ENCODE measurements at regions of chr19 and their contacts with region 1.

Region 1: GRCh38 chr19:42140125-42140754 is 8.0 kb upstream of the POU2F2 start:
- DNase-seq: peak in 6 of 35 experiments; percentile 10 to 39 (median 30)
- ATAC-seq: peak in 2 of 4 experiments; percentile 35 to 54
- H3K4me3 ChIP-seq: no peak overlapping the region
- H3K4me3 Mint-ChIP-seq: no peak overlapping the region
- H3K27ac ChIP-seq: no peak overlapping the region
- H3K27ac Mint-ChIP-seq: no peak overlapping the region
- H3K4me1 ChIP-seq: peaks cover 2 to 10% of the 10 kb centered on the region in 2 experiments
- H3K4me1 Mint-ChIP-seq: peaks cover 13 to 16% (median 13%) of the 10 kb centered on the region in 3 donors
- H3K27me3 ChIP-seq: no peaks in the 10 kb centered on the region
- H3K27me3 Mint-ChIP-seq: no peaks in the 10 kb centered on the region

Region 2: DNA sequence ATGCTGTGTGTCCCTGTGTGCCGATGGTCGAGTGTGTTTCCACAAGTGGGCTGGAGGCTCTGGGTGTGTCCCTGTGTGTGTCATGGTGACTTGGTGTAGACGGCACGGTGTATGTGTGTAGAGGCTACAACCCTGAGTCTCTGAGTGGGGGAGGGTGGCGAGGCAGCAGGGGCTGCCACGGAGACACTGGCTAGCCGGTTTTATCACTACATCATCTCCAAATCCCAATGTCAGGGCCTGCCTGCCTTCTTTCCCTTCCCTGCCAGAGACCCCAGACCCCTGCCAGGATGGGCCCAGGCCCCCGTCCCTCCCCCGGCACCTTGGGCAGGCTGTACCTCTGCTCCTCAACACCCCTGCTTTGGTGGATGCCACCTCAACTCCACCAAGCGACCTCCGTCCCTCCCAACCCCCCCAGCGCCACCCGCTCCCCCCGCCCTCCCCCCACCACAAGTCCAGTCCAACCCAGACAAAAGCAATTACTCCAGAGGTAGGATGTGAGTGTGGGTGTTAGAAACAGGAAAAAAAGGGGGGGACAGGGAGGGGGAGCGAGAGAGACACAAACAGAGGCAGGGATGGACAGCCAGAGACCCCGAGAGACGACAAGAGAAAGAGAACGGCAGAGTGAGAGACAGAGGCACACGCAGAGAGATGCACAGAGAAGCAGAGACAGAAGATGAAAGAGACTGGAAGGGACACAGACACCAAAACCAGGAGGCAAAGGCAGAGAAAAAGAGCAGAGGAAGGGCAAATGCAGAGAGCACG is 13.6 kb after region 1 on chr19:
- CTCF ChIA-PET with region 1: interaction called in 1 of 2 experiments, 3 read pairs
- POLR2A ChIA-PET with region 1: interaction called in 1 of 2 experiments, 16 read pairs
- DNase-seq: no peak
- ATAC-seq: no peak
- H3K4me3 ChIP-seq: no peak overlapping the region
- H3K4me3 Mint-ChIP-seq: peak overlapping the region in 1 of 3 donors; percentile 55
- H3K27ac ChIP-seq: no peak overlapping the region
- H3K27ac Mint-ChIP-seq: no peak overlapping the region
- H3K4me1 ChIP-seq: peaks cover 13 to 23% of the 10 kb centered on the region in 2 experiments
- H3K4me1 Mint-ChIP-seq: peaks cover 25 to 31% (median 26%) of the 10 kb centered on the region in 3 donors
- H3K27me3 ChIP-seq: peaks cover 0 to 24% of the 10 kb centered on the region in 2 experiments
- H3K27me3 Mint-ChIP-seq: peaks cover 0 to 5% of the 10 kb centered on the region in 2 donors

Region 3: GRCh38 chr19:42295831-42296525 is 155.7 kb after region 1 on chr19:
- CTCF ChIA-PET with region 1: interaction called in 1 of 2 experiments, 12 read pairs
- POLR2A ChIA-PET with region 1: no interaction called
- DNase-seq: peak; percentile 66 to 94 (median 85)
- ATAC-seq: peak; percentile 83 to 93 (median 84)
- H3K4me3 ChIP-seq: no peak overlapping the region
- H3K4me3 Mint-ChIP-seq: no peak overlapping the region
- H3K27ac ChIP-seq: peak overlapping the region; percentile 6
- H3K27ac Mint-ChIP-seq: peak overlapping the region; percentile 73 to 80
- H3K4me1 ChIP-seq: peaks cover 0 to 20% of the 10 kb centered on the region in 2 experiments
- H3K4me1 Mint-ChIP-seq: peaks cover 9 to 14% (median 12%) of the 10 kb centered on the region in 3 donors
- H3K27me3 ChIP-seq: no peaks in the 10 kb centered on the region
- H3K27me3 Mint-ChIP-seq: no peaks in the 10 kb centered on the region

Measured in T-cell (primary cell).